ENCODE measurements at regions of chr16 and their contacts with region 1.

Region 1: DNA sequence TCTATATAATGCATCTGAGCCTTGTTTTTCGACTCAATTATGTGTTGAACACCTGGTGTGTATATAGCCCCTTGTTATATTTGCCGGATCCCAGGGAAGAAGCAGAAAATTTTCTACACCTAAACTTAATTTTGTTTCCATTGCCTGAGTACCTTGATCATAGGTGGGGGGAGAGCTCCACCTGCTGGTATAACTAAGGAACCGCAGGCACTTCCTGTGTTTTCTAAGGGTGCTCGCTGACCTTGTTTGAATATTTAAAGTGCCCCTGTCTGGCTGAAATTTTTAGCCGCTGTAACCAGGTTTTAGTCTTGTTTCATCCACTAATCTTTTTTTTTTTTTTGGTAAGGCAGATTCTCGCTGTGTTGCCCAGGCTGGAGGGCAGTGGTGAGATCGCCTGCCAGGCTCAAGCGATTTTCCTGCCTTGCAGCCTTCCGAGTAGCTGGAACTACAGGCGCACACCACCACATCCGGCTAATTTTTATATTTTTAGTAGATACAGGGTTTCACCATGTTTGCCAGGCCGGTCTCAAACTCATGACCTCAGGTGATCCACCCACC is 6.5 kb upstream of the NUBP1 start:
- DNase-seq: peak; percentile 65
- ATAC-seq: peak; percentile 45
- H3K4me3 ChIP-seq: peak overlapping the region; percentile 13; the same call in 1 of the 2 replicates
- H3K27ac ChIP-seq: peak overlapping the region; percentile 82
- H3K4me1 ChIP-seq: peaks cover 41% of the 10 kb centered on the region
- H3K27me3 ChIP-seq: no peaks in the 10 kb centered on the region
- CTCF ChIP-seq: peak; percentile 87 to 94 (median 90); a peak in 5 of 6 replicates
- EP300 ChIP-seq: no peak
- POLR2A ChIP-seq: no peak
- RAD21 ChIP-seq: peak; percentile 97

Region 2: GRCh38 chr16:10256784-10257641 is 480.1 kb before region 1 on chr16:
- CTCF ChIA-PET with region 1: interaction called, 6 read pairs
- POLR2A ChIA-PET with region 1: no interaction called
- RAD21 ChIA-PET with region 1: interaction called, 3 read pairs
- SMC1A ChIA-PET with region 1: interaction called, 7 read pairs
- in situ Hi-C with region 1: loop called (anchors 5 kb)
- intact Hi-C with region 1: loop called (anchors 2 kb)
- DNase-seq: peak; percentile 49
- ATAC-seq: peak; percentile 89
- H3K4me3 ChIP-seq: no peak overlapping the region
- H3K27ac ChIP-seq: 0 out of 2 replicates have a peak overlapping the region, but pooled peaks have one; percentile 42
- H3K4me1 ChIP-seq: peaks cover 19% of the 10 kb centered on the region
- H3K27me3 ChIP-seq: no peaks in the 10 kb centered on the region
- CTCF ChIP-seq: peak; percentile 89 to 96 (median 92)
- EP300 ChIP-seq: peak; percentile 17 to 40; a peak in 1 of 4 replicates
- POLR2A ChIP-seq: no peak
- RAD21 ChIP-seq: peak; percentile 90

Region 3: GRCh38 chr16:10509534-10510025 is 227.6 kb before region 1 on chr16:
- CTCF ChIA-PET with region 1: interaction called, 191 read pairs
- POLR2A ChIA-PET with region 1: interaction called, 10 read pairs
- RAD21 ChIA-PET with region 1: interaction called, 85 read pairs
- SMC1A ChIA-PET with region 1: interaction called, 104 read pairs
- in situ Hi-C with region 1: loop called (anchors 5 kb)
- intact Hi-C with region 1: loop called (anchors 1 kb)
- DNase-seq: peak; percentile 70
- ATAC-seq: peak; percentile 99
- H3K4me3 ChIP-seq: no peak overlapping the region
- H3K27ac ChIP-seq: no peak overlapping the region
- H3K4me1 ChIP-seq: peaks cover 3% of the 10 kb centered on the region; the same call in 1 of the 2 replicates
- H3K27me3 ChIP-seq: no peaks in the 10 kb centered on the region
- CTCF ChIP-seq: peak; percentile 77 to 92 (median 86)
- EP300 ChIP-seq: no peak
- POLR2A ChIP-seq: no peak
- RAD21 ChIP-seq: peak; percentile 97

Region 4: DNA sequence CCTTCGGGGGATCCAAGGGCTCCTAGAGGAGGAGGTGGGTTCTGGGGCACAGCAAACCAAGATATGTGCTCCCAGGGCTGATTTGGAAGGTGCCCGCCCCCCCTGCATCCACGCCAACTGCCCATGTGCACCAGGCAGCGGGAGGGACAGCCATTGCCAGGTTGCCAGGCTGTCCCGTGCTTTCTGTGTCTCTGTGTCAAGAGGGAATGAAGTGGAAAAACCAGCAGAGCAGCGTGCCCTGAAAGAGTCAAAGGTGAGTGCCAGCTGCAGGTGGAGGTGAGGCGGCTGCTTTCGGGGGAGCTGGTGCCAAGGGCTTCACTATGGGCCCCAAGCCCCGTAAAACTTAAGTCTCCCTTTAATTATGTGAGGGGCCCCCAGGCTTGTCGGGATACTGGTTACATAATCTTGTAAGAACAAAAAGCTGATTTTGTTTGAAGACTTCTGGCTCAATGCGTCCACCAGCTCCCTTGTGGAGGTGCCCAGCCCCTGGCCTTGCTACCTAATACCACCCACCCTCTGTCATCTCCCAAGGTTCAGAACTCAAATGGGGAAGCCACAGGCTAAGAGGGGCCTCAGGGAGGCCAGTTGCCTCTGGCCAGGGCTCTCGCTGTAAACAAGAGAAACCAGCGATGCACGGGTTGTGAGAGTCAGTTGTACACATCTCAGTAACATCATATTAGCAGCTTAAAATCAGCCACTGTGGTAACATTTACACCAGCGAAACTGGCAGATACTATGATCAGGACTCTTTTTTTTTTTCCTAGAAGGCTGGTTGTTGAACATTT is 48.6 kb before region 1 on chr16:
- CTCF ChIA-PET with region 1: no interaction called
- POLR2A ChIA-PET with region 1: no interaction called
- RAD21 ChIA-PET with region 1: no interaction called
- SMC1A ChIA-PET with region 1: no interaction called
- in situ Hi-C with region 1: no loop called
- intact Hi-C with region 1: no loop called
- DNase-seq: no peak
- ATAC-seq: peak; percentile 62
- H3K4me3 ChIP-seq: no peak overlapping the region
- H3K27ac ChIP-seq: no peak overlapping the region
- H3K4me1 ChIP-seq: no peaks in the 10 kb centered on the region
- H3K27me3 ChIP-seq: no peaks in the 10 kb centered on the region; a peak in 1 of 4 replicates
- CTCF ChIP-seq: no peak
- EP300 ChIP-seq: no peak
- POLR2A ChIP-seq: no peak
- RAD21 ChIP-seq: no peak

Region 5: GRCh38 chr16:10752843-10753523 is 15.8 kb after region 1 on chr16:
- CTCF ChIA-PET with region 1: interaction called, 4 read pairs
- POLR2A ChIA-PET with region 1: interaction called, 9 read pairs
- RAD21 ChIA-PET with region 1: interaction called, 26 read pairs
- SMC1A ChIA-PET with region 1: interaction called, 25 read pairs
- in situ Hi-C with region 1: no loop called
- intact Hi-C with region 1: no loop called
- DNase-seq: peak; percentile 74
- ATAC-seq: peak; percentile 90
- H3K4me3 ChIP-seq: 0 out of 2 replicates have a peak overlapping the region, but pooled peaks have one; percentile 2
- H3K27ac ChIP-seq: peak overlapping the region; percentile 49
- H3K4me1 ChIP-seq: peaks cover 31% of the 10 kb centered on the region
- H3K27me3 ChIP-seq: no peaks in the 10 kb centered on the region
- CTCF ChIP-seq: no peak
- EP300 ChIP-seq: peak in 1 of 2 experiments; percentile 72; a peak in 2 of 4 replicates
- POLR2A ChIP-seq: no peak
- RAD21 ChIP-seq: no peak

Region 6: DNA sequence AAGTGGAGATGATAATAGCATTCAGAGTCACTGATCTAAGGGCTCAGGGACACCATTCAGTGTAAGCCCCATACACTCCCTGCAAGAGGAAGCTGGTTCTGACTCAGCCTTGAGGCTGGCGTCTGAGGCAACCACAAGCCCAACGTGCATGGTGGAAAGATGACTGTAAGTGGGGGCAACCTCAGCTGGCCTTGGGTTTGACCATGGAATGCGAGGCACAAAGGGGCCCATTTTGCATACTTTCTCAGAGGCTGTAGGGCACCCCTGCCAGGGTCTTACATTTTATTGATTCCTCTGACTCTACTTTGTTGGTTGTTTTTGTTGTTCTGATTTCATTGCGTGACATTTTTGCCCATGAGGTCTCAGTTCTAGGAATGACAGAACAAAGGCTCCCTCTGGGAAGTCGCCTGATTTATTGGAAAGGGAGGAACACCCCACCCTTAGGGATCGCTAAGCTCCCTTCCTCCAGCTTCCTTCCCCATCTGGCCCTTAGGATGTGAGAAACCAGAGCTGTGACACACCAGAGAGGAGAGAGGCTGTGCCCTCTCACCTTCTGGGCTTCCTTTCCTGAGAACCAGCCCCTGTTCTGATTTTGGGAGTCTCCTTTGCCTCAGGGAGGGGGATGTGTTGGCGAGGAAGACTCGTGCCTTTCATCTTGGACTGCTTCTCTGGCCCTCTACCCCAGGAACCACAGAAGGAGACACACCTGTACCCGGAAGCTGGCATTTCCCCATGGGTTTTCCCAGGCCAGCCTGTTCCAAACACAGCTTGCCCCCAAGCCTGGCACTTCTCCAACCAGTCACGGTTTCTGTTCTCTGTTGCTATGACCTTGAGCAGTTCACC is 134.2 kb after region 1 on chr16:
- CTCF ChIA-PET with region 1: interaction called, 11 read pairs
- POLR2A ChIA-PET with region 1: interaction called, 25 read pairs
- RAD21 ChIA-PET with region 1: interaction called, 65 read pairs
- SMC1A ChIA-PET with region 1: interaction called, 66 read pairs
- in situ Hi-C with region 1: loop called (anchors 5 kb)
- intact Hi-C with region 1: loop called (anchors 2 kb)
- DNase-seq: peak; percentile 86
- ATAC-seq: peak; percentile 78
- H3K4me3 ChIP-seq: no peak overlapping the region
- H3K27ac ChIP-seq: peak overlapping the region; percentile 65
- H3K4me1 ChIP-seq: peaks cover 84% of the 10 kb centered on the region
- H3K27me3 ChIP-seq: no peaks in the 10 kb centered on the region
- CTCF ChIP-seq: no peak
- EP300 ChIP-seq: peak; percentile 88 to 90
- POLR2A ChIP-seq: 0 out of 2 replicates have a peak, but pooled peaks have one; percentile 27
- RAD21 ChIP-seq: peak; percentile 16; the same call in 1 of the 2 replicates

Region 7: GRCh38 chr16:10906914-10907756 is 170.0 kb after region 1 on chr16:
- CTCF ChIA-PET with region 1: interaction called, 4 read pairs
- POLR2A ChIA-PET with region 1: interaction called, 4 read pairs
- RAD21 ChIA-PET with region 1: interaction called, 12 read pairs
- SMC1A ChIA-PET with region 1: interaction called, 7 read pairs
- in situ Hi-C with region 1: no loop called
- intact Hi-C with region 1: no loop called
- DNase-seq: no peak
- ATAC-seq: no peak
- H3K4me3 ChIP-seq: no peak overlapping the region
- H3K27ac ChIP-seq: no peak overlapping the region
- H3K4me1 ChIP-seq: peaks cover 7% of the 10 kb centered on the region
- H3K27me3 ChIP-seq: no peaks in the 10 kb centered on the region
- CTCF ChIP-seq: no peak
- EP300 ChIP-seq: no peak
- POLR2A ChIP-seq: no peak
- RAD21 ChIP-seq: no peak

Region 8: GRCh38 chr16:11004957-11005610 is 267.9 kb after region 1 on chr16:
- CTCF ChIA-PET with region 1: no interaction called
- POLR2A ChIA-PET with region 1: no interaction called
- RAD21 ChIA-PET with region 1: no interaction called
- SMC1A ChIA-PET with region 1: no interaction called
- in situ Hi-C with region 1: no loop called
- intact Hi-C with region 1: no loop called
- DNase-seq: no peak
- ATAC-seq: no peak
- H3K4me3 ChIP-seq: no peak overlapping the region
- H3K27ac ChIP-seq: no peak overlapping the region
- H3K4me1 ChIP-seq: no peaks in the 10 kb centered on the region
- H3K27me3 ChIP-seq: no peaks in the 10 kb centered on the region
- CTCF ChIP-seq: no peak
- EP300 ChIP-seq: no peak
- POLR2A ChIP-seq: no peak
- RAD21 ChIP-seq: no peak

Region 9: DNA sequence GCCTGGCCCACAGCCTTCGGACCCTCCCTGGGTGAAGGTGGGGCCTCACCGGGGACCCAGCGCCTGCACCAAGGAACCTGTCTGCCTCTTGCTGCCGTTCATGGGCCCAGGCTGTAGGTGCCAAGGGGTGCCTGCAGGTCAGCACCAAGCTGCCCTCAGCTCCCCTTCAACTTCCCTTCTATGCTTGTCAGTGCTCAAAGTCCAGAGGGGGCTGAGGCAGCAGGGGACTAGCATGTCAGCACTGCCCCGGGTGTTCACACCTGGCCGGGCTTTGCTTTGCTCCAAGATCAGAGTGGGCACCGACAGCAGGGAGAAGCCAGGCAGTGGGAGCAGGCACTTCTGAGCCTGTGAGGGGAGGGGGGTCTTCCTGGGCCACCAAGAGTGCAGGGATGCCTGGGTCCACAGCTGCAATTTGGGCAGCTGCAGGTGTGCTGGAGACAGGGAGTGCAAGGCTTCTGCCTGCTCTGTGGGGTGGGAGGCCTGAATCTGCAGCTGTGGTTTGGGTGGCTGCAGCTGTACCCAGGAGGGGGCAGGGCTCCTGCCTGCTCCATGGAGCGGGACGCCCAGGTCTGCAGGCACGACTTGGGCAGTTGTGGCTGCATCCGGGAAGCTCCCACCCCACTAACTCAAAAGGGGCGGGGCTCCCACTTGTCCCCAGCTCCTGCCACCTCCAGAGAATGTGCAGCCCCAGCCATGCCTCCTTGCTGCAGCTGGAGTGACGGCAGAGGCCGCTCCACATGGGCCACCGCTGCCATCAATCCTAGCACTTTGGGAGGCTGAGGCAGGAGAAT is 571.5 kb after region 1 on chr16:
- CTCF ChIA-PET with region 1: no interaction called
- POLR2A ChIA-PET with region 1: no interaction called
- RAD21 ChIA-PET with region 1: no interaction called
- SMC1A ChIA-PET with region 1: no interaction called
- in situ Hi-C with region 1: no loop called
- intact Hi-C with region 1: no loop called
- DNase-seq: peak; percentile 81
- ATAC-seq: peak; percentile 60
- H3K4me3 ChIP-seq: no peak overlapping the region
- H3K27ac ChIP-seq: peak overlapping the region; percentile 90
- H3K4me1 ChIP-seq: peaks cover 64% of the 10 kb centered on the region
- H3K27me3 ChIP-seq: no peaks in the 10 kb centered on the region
- CTCF ChIP-seq: no peak
- EP300 ChIP-seq: peak; percentile 79 to 87
- POLR2A ChIP-seq: no peak
- RAD21 ChIP-seq: no peak